GM10248 (cell line): ENCODE measurements at regions of chr4 and their contacts with region 1.

Region 1: GRCh38 chr4:99054428-99054994 is 34.1 kb downstream of the ADH5 start:
- DNase-seq: no peak
- CTCF ChIP-seq: no peak

Region 2: DNA sequence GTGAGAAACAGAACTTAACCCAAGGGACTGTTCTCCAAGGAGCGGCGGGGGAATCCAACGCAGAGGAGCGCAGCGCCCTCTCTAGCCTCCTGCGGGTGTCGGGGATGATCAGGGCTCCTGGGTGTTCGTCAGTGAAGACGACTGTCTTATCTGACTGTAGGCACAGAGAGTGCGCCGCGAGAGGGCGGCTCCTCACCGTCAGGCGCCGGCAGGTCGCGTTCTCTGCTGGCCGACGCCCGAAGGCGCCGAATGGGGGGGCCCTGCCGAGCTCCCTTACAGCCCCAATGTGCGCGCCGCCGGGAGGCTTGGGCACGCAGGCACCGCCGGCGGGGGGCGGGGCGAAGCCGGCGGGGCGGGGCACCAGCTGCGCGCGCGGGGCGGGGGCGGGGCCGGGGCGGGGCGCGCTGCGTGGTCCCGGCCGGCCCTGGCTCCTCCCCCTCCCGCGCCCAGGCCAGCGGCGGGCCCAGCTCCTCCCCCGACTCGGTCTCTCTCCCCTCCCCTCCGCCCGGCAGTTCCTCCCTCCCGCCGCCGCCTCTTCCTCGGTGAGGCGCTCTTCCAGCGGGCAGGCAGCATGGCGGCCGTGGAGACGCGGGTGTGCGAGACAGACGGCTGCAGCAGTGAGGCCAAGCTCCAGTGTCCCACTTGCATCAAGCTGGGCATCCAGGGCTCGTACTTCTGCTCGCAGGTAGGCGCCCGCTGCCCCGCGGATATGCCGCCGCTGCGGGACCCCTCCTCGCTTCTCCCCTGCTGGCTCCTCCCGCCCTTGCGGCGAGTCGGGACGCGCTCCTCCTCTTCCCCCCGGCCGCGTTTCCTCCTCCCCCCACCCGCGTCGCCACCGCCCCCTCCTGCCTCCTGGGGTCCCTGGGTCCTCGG is 59.1 kb before region 1 on chr4 and contains the start of gene METAP1:
- CTCF ChIA-PET with region 1: interaction called, 165 read pairs
- POLR2A ChIA-PET with region 1: interaction called, 4 read pairs
- DNase-seq: peak; percentile 96
- CTCF ChIP-seq: peak; percentile 86

Region 3: GRCh38 chr4:99008051-99008450 is 46.5 kb before region 1 on chr4:
- CTCF ChIA-PET with region 1: interaction called, 18 read pairs
- POLR2A ChIA-PET with region 1: no interaction called
- DNase-seq: no peak
- CTCF ChIP-seq: no peak

Region 4: GRCh38 chr4:99038213-99038612 is 16.3 kb before region 1 on chr4:
- CTCF ChIA-PET with region 1: interaction called, 16 read pairs
- POLR2A ChIA-PET with region 1: interaction called, 3 read pairs
- DNase-seq: no peak
- CTCF ChIP-seq: no peak

Region 5: GRCh38 chr4:99067617-99068016 is 13.1 kb after region 1 on chr4:
- CTCF ChIA-PET with region 1: interaction called, 39 read pairs
- POLR2A ChIA-PET with region 1: no interaction called
- DNase-seq: no peak
- CTCF ChIP-seq: no peak

Region 6: GRCh38 chr4:99088481-99089365 is 34.2 kb after region 1 on chr4 and contains the start of gene ADH5:
- CTCF ChIA-PET with region 1: interaction called, 10 read pairs
- POLR2A ChIA-PET with region 1: no interaction called
- DNase-seq: peak; percentile 95
- CTCF ChIP-seq: no peak

Region 7: DNA sequence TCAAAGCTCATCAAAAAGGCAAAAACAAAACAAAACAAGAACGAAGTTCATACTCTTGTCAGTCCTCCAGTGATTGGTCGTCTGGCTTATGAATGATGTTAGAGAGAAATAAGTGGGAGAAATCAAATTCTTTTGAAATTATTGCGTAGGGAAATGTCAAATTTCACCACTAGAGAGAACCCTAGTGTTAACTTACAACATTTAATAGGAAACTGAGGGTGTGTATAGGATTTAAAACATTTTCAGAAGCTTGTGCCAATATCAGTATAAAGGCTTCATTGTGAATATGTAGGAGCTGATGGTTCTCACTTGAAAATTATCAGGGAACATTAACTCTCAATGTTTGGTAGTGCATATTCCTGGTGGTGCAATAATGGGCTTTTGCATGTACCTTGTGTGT is 147.2 kb after region 1 on chr4:
- CTCF ChIA-PET with region 1: no interaction called
- POLR2A ChIA-PET with region 1: no interaction called
- DNase-seq: no peak
- CTCF ChIP-seq: no peak